AG04450 (cell line): ENCODE measurements at regions of chr11 and their contacts with region 1.

Region 1: DNA sequence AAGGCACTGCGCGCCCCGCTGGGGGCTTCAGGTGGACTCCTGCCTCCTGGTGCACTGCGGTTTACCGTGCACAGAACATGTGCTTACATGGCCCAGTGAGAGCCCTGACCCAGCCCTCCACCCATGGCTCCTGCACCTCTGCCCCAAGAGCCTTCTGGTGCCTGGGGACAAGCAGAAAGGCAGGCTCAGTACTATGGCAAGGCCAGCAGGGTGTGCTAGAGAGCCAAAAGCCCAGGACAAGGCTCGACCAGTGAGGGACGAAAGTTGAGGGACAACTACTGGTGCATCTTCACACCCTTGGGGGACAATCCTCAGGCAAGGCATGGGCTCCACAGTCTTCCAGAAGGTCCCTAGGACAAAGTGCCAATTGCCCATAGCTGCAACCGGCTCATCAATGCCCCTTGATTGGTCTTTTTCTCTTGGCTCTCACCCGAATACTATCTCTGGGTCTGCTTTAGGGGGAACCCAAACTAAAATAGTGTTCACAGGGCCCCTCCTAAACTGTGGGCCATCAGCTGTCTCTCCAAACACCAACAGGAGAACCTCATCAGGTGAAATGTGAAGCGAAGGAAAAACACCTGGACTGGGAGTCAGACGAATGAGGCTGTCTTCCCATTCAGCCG is 13.5 kb downstream of the PGA5 start:
- DNase-seq: peak; percentile 27
- H3K4me3 ChIP-seq: no peak overlapping the region
- H3K27ac ChIP-seq: no peak overlapping the region
- H3K27me3 ChIP-seq: peaks cover 6% of the 10 kb centered on the region
- CTCF ChIP-seq: peak; percentile 93

Region 2: GRCh38 chr11:61266602-61267001 is 12.1 kb after region 1 on chr11:
- CTCF ChIA-PET with region 1: interaction called, 17 read pairs
- POLR2A ChIA-PET with region 1: no interaction called
- DNase-seq: no peak
- H3K4me3 ChIP-seq: no peak overlapping the region
- H3K27ac ChIP-seq: no peak overlapping the region
- H3K27me3 ChIP-seq: no peaks in the 10 kb centered on the region
- CTCF ChIP-seq: no peak

Region 3: DNA sequence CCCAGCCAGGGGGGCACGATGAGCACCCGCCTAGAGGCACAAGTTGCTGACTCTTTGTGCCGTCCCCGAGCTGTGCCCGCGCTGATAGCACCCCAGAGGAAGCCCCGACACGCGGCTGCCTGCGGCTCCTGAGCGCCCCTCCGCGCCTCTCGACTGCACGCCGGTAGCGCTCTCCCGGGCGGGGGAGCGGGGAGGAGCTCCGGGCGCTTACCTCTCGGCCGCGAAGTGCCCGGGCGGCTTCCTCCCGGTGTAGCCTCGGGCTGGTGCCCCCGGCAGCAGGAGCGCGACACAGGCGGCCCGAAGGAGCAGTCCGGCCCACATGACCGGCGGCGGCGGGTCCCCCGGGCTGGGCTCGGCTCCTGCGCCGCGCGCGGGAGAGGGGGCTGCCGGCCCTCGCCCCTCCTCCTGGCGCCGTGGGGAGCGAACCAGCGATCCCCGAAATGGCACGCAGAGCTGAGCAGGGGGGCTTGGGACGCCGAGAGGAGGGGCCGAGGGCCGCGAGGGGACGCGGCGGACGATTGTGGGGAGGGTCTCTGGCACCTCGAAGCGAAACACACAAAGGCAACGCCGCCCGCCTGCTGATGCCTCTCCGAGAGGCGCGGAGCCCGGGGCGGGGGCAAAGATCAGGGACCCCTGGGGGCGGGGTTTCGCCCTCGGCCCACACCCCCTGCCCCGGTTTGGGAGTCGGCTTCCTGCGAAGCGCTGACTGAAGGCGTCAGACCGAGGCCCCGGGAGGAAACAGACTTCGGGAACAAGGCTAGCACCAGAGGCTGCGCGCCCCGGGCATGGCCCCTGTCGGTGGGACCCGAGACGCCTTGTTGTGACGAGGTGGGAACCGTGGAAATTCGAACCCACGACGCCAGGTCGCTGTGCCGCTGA is 40.4 kb after region 1 on chr11 and contains the start of gene VWCE:
- CTCF ChIA-PET with region 1: interaction called, 13 read pairs
- POLR2A ChIA-PET with region 1: interaction called, 4 read pairs
- DNase-seq: no peak
- H3K4me3 ChIP-seq: peak within 1 kb of the TSS; percentile 65
- H3K27ac ChIP-seq: no peak within 1 kb of the TSS
- H3K27me3 ChIP-seq: no peaks in the 10 kb centered on the region
- CTCF ChIP-seq: peak; percentile 42
- polyA plus RNA-seq, gene VWCE: 1.4 and 1.7 TPM in 2 replicates

Region 4: GRCh38 chr11:61375761-61376108 is 121.2 kb after region 1 on chr11:
- CTCF ChIA-PET with region 1: no interaction called
- POLR2A ChIA-PET with region 1: no interaction called
- DNase-seq: no peak
- H3K4me3 ChIP-seq: no peak overlapping the region
- H3K27ac ChIP-seq: no peak overlapping the region
- H3K27me3 ChIP-seq: no peaks in the 10 kb centered on the region
- CTCF ChIP-seq: no peak